PC-3 (cell line): ENCODE measurements at regions of chr14 and their contacts with region 1.

Region 1: DNA sequence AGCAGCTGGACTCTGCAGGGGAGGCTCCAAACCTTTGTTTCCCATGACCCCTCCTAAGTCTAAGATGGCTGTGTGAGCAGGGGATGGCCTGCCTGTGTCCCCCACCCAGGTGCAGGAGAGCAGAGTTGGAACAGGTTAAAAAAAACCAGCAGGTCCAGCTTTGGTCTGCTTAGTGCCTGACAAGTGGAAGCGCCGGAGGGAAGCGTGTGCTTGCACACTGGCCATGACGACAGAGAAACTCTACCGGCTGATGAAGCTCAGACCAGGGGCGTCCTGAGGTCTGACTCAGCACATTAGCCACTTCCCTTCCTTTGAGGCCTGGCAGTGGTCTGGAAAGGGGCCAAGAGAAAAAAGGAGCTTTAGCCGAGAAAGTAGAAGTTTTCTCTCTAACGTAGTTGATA is 280.1 kb downstream of the VRK1 start:
- DNase-seq: peak; percentile 97
- ATAC-seq: peak; percentile 90
- H3K4me3 ChIP-seq: peak overlapping the region; percentile 8; the same call in 1 of the 2 replicates
- H3K27ac ChIP-seq: peak overlapping the region; percentile 95
- H3K4me1 ChIP-seq: peaks cover 22% of the 10 kb centered on the region
- H3K27me3 ChIP-seq: no peaks in the 10 kb centered on the region
- CTCF ChIP-seq: no peak

Region 2: DNA sequence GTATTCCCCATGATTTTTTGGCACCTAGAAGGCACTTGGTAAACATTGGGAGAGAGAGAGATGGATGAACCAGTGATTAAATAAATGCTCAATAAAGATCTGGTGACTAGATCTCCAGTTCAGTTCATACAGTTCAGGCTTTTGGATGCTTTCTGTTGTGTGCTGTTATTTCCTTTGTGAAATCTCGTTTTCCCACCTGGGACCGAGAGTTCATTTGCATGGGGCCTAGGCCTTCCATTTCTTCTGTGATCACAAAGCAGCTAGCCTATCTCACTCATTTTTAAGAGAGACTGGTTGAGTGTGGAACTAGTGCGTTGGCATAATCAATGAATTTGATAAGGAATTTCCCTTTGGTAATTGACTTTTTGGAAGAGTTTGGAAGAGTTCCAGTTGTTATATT is 176.0 kb before region 1 on chr14:
- CTCF ChIA-PET with region 1: no interaction called
- POLR2A ChIA-PET with region 1: no interaction called
- intact Hi-C with region 1: loop called (anchors 5 kb)
- DNase-seq: no peak
- ATAC-seq: no peak
- H3K4me3 ChIP-seq: no peak overlapping the region
- H3K27ac ChIP-seq: no peak overlapping the region
- H3K4me1 ChIP-seq: peaks cover 28% of the 10 kb centered on the region
- H3K27me3 ChIP-seq: no peaks in the 10 kb centered on the region
- CTCF ChIP-seq: no peak

Region 3: DNA sequence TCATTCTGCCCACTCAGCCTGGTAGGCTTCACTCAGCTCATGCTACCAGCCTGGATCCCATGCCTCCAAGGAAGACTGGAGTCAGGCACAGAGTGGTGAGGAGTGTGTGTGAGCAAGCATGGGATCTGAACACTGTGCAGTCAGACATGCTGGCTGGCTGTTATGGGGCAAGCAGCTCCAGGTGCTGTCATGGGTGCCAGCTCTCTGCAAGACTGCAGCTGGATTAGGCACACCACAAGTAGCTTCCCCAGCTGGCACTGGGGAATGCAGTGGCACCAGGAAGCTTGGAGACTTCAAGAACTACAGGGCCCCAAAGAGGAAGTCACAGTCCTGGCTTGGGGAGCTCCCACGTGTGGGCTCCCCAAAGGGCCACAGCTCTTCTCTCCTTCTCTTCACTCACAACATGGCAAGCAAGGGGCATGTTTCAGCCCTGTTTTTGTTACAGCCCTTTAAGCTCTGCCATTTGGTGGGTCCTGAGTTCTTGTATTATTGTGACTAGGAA is 77.5 kb before region 1 on chr14:
- CTCF ChIA-PET with region 1: no interaction called
- POLR2A ChIA-PET with region 1: no interaction called
- intact Hi-C with region 1: loop called (anchors 2 kb)
- DNase-seq: no peak
- ATAC-seq: no peak
- H3K4me3 ChIP-seq: no peak overlapping the region
- H3K27ac ChIP-seq: no peak overlapping the region
- H3K4me1 ChIP-seq: no peaks in the 10 kb centered on the region
- H3K27me3 ChIP-seq: no peaks in the 10 kb centered on the region
- CTCF ChIP-seq: no peak